Activated naive CD4-positive, alpha-beta T cell treated with anti-CD3 and anti-CD28 coated beads for 36 hours (primary cell): ENCODE measurements at regions of chr5 and their contacts with region 1.

Region 1: GRCh38 chr5:141753971-141754713 is 72.1 kb upstream of the ARAP3 start:
- DNase-seq: peak; percentile 61
- H3K4me3 Mint-ChIP-seq: no peak overlapping the region
- H3K27ac Mint-ChIP-seq: no peak overlapping the region
- H3K4me1 Mint-ChIP-seq: peaks cover 4% of the 10 kb centered on the region
- H3K27me3 Mint-ChIP-seq: peaks cover 44% of the 10 kb centered on the region

Region 2: DNA sequence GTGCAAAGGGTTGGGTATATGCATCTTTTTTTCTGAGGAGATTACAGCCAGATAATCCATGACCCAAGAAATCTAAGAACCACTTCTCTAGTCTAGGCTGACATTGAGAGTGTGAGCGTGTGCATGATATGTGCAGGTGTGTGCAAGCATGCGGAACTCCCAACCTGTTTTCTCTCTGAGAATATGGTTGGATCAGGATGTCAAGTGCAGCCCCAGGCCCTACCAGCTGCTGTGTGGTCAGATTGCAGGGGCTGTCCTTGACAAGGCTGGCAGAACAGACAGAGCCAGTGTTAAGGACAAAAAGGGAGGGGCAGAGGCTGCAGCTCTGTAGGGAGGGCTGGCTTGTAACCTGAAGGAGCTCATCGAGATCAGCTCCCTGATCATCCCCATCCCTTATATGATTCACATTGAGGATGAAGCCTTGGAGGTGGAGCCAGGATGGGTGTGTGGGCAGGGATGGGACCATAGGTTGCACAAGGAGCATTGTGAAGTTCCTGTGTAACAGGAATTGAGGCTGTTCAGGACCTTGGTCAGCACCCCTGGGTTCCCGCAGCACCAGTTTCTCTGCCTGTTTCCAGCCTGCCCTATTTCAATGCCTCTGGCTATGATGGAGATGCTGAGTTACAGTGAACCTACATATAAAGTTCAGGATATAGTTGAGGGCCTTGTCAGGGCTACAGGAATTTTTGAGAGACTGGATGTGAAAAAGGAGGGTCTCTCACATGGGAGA is 19.5 kb before region 1 on chr5:
- CTCF ChIA-PET with region 1: no interaction called
- intact Hi-C with region 1: loop called (anchors 1 kb)
- DNase-seq: peak; percentile 66
- H3K4me3 Mint-ChIP-seq: no peak overlapping the region
- H3K27ac Mint-ChIP-seq: no peak overlapping the region
- H3K4me1 Mint-ChIP-seq: no peaks in the 10 kb centered on the region
- H3K27me3 Mint-ChIP-seq: peaks cover 7% of the 10 kb centered on the region

Region 3: GRCh38 chr5:141742866-141743851 is 11.0 kb before region 1 on chr5:
- CTCF ChIA-PET with region 1: no interaction called
- intact Hi-C with region 1: loop called (anchors 1 kb)
- DNase-seq: peak; percentile 52
- H3K4me3 Mint-ChIP-seq: no peak overlapping the region
- H3K27ac Mint-ChIP-seq: no peak overlapping the region
- H3K4me1 Mint-ChIP-seq: no peaks in the 10 kb centered on the region
- H3K27me3 Mint-ChIP-seq: peaks cover 23% of the 10 kb centered on the region

Region 4: GRCh38 chr5:141855265-141856036 is 101.3 kb after region 1 on chr5:
- CTCF ChIA-PET with region 1: no interaction called
- intact Hi-C with region 1: no loop called
- DNase-seq: no peak
- H3K4me3 Mint-ChIP-seq: no peak overlapping the region
- H3K27ac Mint-ChIP-seq: no peak overlapping the region
- H3K4me1 Mint-ChIP-seq: no peaks in the 10 kb centered on the region
- H3K27me3 Mint-ChIP-seq: no peaks in the 10 kb centered on the region

Region 5: GRCh38 chr5:141951332-141951781 is 197.2 kb after region 1 on chr5:
- CTCF ChIA-PET with region 1: no interaction called
- intact Hi-C with region 1: no loop called
- DNase-seq: peak; percentile 41
- H3K4me3 Mint-ChIP-seq: no peak overlapping the region
- H3K27ac Mint-ChIP-seq: no peak overlapping the region
- H3K4me1 Mint-ChIP-seq: peaks cover 7% of the 10 kb centered on the region
- H3K27me3 Mint-ChIP-seq: no peaks in the 10 kb centered on the region

Region 6: GRCh38 chr5:141968914-141969608 is 214.9 kb after region 1 on chr5 and contains the start of gene RNF14:
- CTCF ChIA-PET with region 1: no interaction called
- intact Hi-C with region 1: no loop called
- DNase-seq: peak; percentile 96
- H3K4me3 Mint-ChIP-seq: peak within 1 kb of the TSS; percentile 93
- H3K27ac Mint-ChIP-seq: peak within 1 kb of the TSS; percentile 91
- H3K4me1 Mint-ChIP-seq: peaks cover 37% of the 10 kb centered on the region
- H3K27me3 Mint-ChIP-seq: no peaks in the 10 kb centered on the region
- total RNA-seq, gene RNF14: 29.8 to 35.6 TPM